Aorta (tissue), 5 donors: ENCODE measurements at regions of chr4 and their contacts with region 1.

Region 1: GRCh38 chr4:145557720-145558119 is 61.5 kb upstream of the MMAA start:
- DNase-seq: peak in 1 of 2 donors; percentile 54
- ATAC-seq: peak; percentile 82
- H3K4me3 ChIP-seq: no peak overlapping the region
- H3K27ac ChIP-seq: no peak overlapping the region
- H3K4me1 ChIP-seq: no peaks in the 10 kb centered on the region
- H3K27me3 ChIP-seq: no peaks in the 10 kb centered on the region

Region 2: DNA sequence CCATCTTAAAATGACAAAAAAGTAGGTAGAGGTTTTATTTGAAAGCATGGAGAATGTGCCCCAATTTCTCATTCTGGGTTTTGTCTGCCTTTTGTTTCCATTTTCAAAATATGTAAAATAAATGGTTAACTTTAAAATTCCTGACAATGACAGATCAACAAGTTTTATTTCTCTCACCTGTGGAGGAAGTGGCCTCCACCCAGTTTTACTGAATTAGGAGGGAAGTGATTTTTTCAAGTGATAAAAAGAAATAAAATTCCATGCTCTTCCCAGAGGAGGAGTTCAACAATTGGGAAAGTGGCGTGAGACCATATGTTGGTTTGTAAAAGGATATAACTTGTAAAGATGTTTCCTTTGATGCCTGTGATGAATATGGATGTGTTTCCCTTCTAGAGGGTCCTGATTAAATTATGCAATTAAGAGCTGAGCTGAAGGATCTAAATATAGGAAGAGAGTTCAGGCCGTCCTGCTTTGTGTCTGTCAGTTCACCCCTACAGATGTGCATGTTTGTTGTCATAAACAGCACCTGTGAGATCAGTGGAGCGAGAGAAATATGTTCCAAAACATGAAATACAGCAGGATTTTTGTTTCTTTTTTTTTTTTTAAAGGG is 56.6 kb before region 1 on chr4:
- intact Hi-C with region 1: loop called in 1 of 2 experiments (anchors 5 kb)
- DNase-seq: no peak
- ATAC-seq: no peak
- H3K4me3 ChIP-seq: no peak overlapping the region
- H3K27ac ChIP-seq: no peak overlapping the region
- H3K4me1 ChIP-seq: peaks cover 0 to 13% of the 10 kb centered on the region in 2 donors
- H3K27me3 ChIP-seq: no peaks in the 10 kb centered on the region

Region 3: GRCh38 chr4:145602129-145602760 is 44.5 kb after region 1 on chr4:
- intact Hi-C with region 1: no loop called
- DNase-seq: no peak
- ATAC-seq: no peak
- H3K4me3 ChIP-seq: no peak overlapping the region
- H3K27ac ChIP-seq: no peak overlapping the region
- H3K4me1 ChIP-seq: no peaks in the 10 kb centered on the region
- H3K27me3 ChIP-seq: no peaks in the 10 kb centered on the region